ENCODE measurements at regions of chr5 and their contacts with region 1.

Region 1: DNA sequence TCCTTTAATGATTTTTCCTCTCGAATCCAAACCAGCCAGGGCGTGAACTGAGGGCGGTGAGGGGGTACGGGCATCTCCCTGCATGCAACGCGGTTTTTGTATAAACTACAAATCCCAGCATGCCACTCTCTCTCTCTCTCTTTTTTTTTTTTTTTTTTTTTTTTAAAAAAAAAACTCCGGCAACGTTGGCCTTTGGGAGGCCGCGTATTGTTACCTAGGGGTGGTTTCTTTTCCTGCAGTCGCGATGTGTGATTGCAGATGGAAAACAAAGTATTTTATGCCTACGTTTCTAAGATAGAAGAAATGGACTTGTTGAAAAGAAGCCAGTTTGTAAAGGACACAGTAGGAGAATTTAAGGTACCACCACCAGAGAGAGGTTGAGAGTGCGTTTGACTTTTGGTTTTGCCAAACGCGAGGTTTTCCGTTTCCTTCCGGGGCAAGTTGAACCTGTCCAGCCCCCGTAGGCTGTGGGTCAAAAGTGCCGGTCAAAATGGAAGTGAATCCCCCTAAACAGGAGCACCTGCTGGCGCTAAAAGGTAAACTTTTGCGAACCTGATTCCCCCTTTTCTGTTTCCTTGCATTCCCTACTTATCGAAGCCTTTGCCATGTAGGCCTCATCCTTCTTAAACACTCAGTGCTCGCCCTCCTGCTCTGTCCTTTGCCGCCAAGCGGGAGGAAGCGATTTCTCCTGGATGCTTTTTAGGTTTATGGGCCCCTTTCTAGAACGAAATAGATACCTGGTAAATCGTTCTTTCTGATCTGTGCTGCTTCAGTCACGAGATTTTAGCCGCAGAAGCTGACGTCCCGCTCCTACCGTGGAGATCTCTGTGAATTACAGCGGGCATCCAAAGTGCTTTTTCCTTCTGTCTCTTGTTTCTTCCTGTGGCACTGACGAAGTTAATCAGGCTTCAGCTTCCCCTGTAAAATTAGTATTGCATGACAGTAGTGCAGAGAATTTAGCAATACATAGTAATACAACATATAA is at the starts of genes SHLD3 and TRAPPC13:
- DNase-seq: peak; percentile 88
- H3K4me3 Mint-ChIP-seq: peak within 1 kb of the TSS; percentile 99
- H3K27ac Mint-ChIP-seq: peak within 1 kb of the TSS; percentile 94
- H3K4me1 Mint-ChIP-seq: peaks cover 50% of the 10 kb centered on the region
- H3K27me3 Mint-ChIP-seq: no peaks in the 10 kb centered on the region
- total RNA-seq, gene SHLD3: 2.9 to 3.1 TPM
- total RNA-seq, gene TRAPPC13: 25.7 to 29.0 TPM

Region 2: GRCh38 chr5:65721720-65722574 is 97.1 kb after region 1 on chr5 and contains the starts of genes NLN and SGTB:
- CTCF ChIA-PET with region 1: no interaction called
- intact Hi-C with region 1: loop called (anchors 1 kb)
- DNase-seq: peak; percentile 80
- H3K4me3 Mint-ChIP-seq: peak within 1 kb of the TSS; percentile 88
- H3K27ac Mint-ChIP-seq: peak within 1 kb of the TSS; percentile 94
- H3K4me1 Mint-ChIP-seq: peaks cover 13% of the 10 kb centered on the region
- H3K27me3 Mint-ChIP-seq: no peaks in the 10 kb centered on the region
- total RNA-seq, gene NLN: 32.4 to 35.5 TPM
- total RNA-seq, gene SGTB: 16.1 to 17.3 TPM

Region 3: GRCh38 chr5:66255714-66256113 is 630.9 kb after region 1 on chr5:
- CTCF ChIA-PET with region 1: no interaction called
- intact Hi-C with region 1: no loop called
- DNase-seq: no peak
- H3K4me3 Mint-ChIP-seq: no peak overlapping the region
- H3K27ac Mint-ChIP-seq: no peak overlapping the region
- H3K4me1 Mint-ChIP-seq: no peaks in the 10 kb centered on the region
- H3K27me3 Mint-ChIP-seq: no peaks in the 10 kb centered on the region